ENCODE measurements at regions of chr2 and their contacts with region 1.

Region 1: DNA sequence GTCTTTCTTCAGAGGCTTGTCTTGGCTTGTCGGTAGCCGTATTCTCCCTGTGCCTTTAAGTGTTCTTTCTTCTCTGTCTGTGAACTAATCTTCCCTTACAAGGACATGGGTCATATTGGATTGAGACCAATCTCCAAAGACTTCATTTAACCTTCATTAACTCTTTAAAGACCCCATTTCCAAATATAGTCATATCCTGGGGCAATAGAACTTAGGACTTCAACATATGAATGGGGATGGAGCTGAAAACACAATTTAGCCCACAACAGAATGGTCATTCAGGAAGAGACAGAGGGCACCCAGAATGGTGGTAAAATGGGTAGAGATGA is 82.1 kb upstream of the TANK start:
- DNase-seq: no peak
- H3K4me3 ChIP-seq: no peak overlapping the region
- H3K4me3 Mint-ChIP-seq: peak overlapping the region in 1 of 7 donors; percentile 7
- H3K27ac ChIP-seq: no peak overlapping the region
- H3K27ac Mint-ChIP-seq: peak overlapping the region in 7 of 8 donors; percentile 22 to 90 (median 64)
- H3K4me1 ChIP-seq: peaks cover 23% of the 10 kb centered on the region
- H3K4me1 Mint-ChIP-seq: peaks cover 28 to 35% (median 29%) of the 10 kb centered on the region in 3 donors
- H3K27me3 ChIP-seq: no peaks in the 10 kb centered on the region
- H3K27me3 Mint-ChIP-seq: no peaks in the 10 kb centered on the region

Region 2: DNA sequence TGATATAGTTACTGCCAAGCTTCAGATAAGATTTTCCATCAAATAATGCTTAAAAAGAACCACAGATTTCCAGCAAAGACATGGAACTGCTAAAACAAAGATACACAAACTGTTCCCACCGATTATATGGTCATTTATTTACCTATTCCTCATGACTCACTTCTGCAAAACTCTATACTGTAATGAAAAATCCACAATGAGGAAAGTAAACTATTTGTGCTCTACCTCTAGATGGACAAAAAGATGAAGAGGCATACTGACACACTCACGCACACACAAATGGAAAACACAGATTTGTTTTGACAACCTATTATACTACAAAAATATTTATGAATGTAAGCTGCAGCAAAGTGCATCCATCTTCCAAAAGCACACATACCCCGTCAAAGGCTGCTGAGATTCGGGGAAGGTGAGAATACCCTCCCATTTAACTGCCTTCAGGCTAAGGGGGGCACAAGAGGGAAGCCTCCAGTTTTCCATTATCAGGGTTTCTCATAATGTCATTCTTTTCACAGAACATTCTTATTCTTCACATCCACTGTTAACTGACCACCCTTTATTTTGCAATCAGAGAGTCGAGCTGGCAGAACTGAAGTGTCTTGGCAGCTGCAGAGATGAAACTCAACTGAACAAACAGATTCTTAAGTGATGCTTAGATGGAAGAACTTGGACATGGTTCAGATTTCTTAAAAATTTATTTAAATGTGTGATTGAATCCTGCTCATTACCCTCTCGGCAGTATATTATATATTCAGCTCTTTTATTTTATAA is 33.9 kb before region 1 on chr2:
- CTCF ChIA-PET with region 1: no interaction called
- POLR2A ChIA-PET with region 1: no interaction called
- DNase-seq: no peak
- H3K4me3 ChIP-seq: no peak overlapping the region
- H3K4me3 Mint-ChIP-seq: no peak overlapping the region
- H3K27ac ChIP-seq: no peak overlapping the region
- H3K27ac Mint-ChIP-seq: no peak overlapping the region
- H3K4me1 ChIP-seq: no peaks in the 10 kb centered on the region
- H3K4me1 Mint-ChIP-seq: no peaks in the 10 kb centered on the region
- H3K27me3 ChIP-seq: no peaks in the 10 kb centered on the region
- H3K27me3 Mint-ChIP-seq: peaks cover 12 to 54% of the 10 kb centered on the region in 2 donors

Region 3: DNA sequence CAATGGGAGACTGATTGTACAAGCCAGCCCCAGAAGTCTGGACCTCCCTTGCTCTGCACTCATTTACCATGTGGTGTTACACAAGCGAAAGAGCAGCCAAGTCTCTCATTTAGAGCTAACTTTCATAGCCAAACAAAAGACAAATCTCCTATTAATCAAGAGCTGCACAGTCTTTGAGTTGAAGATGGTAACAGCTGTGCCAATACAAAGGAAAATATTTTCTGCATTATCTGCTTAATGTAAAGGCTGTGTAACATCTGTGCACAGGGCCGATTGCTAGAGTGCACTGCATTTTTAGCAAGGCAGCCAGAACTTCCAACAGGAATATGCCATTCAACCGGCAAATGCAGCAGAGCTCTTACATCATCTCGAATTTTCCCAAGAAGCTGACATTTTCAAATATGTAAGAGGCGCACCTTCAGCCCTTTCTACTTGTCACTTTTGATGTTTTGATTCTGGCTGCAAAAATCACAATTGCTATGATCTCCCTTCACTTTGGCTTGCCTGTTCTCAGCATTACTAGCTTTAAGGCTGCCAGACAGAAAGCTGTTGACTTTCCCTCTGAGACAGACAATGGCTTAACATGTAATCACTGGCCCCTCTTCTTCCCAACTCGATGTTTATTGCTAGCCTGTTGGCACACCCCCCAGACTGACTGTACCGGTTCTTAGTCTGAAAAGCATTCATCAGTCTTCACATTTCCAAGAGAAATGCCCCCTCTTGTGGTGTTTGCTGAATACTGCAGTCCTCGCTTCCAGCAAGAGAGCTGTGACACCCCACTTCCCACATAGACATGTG is 14.8 kb before region 1 on chr2:
- CTCF ChIA-PET with region 1: interaction called, 19 read pairs
- POLR2A ChIA-PET with region 1: no interaction called
- DNase-seq: peak; percentile 30 to 71 (median 49)
- H3K4me3 ChIP-seq: no peak overlapping the region
- H3K4me3 Mint-ChIP-seq: no peak overlapping the region
- H3K27ac ChIP-seq: no peak overlapping the region
- H3K27ac Mint-ChIP-seq: no peak overlapping the region
- H3K4me1 ChIP-seq: no peaks in the 10 kb centered on the region
- H3K4me1 Mint-ChIP-seq: peaks cover 4 to 5% (median 5%) of the 10 kb centered on the region in 3 donors
- H3K27me3 ChIP-seq: no peaks in the 10 kb centered on the region
- H3K27me3 Mint-ChIP-seq: no peaks in the 10 kb centered on the region

Measured in CD8-positive, alpha-beta memory T cell (primary cell).